WTC11 (cell line): ENCODE measurements at regions of chr1 and their contacts with region 1.

Region 1: GRCh38 chr1:63087966-63088365 is 234.4 kb upstream of the FOXD3 start:
- DNase-seq: peak; percentile 74
- ATAC-seq: peak; percentile 100
- H3K4me3 Mint-ChIP-seq: no peak overlapping the region
- H3K27ac Mint-ChIP-seq: 0 out of 2 replicates have a peak overlapping the region, but pooled peaks have one; percentile 62
- H3K4me1 Mint-ChIP-seq: peaks cover 17% of the 10 kb centered on the region
- H3K27me3 Mint-ChIP-seq: peaks cover 4% of the 10 kb centered on the region; the same call in 1 of the 2 replicates
- CTCF ChIP-seq: no peak

Region 2: GRCh38 chr1:63108206-63108605 is 20.2 kb after region 1 on chr1:
- CTCF ChIA-PET with region 1: interaction called, 16 read pairs
- POLR2A ChIA-PET with region 1: no interaction called
- DNase-seq: no peak
- ATAC-seq: no peak
- H3K4me3 Mint-ChIP-seq: no peak overlapping the region
- H3K27ac Mint-ChIP-seq: no peak overlapping the region
- H3K4me1 Mint-ChIP-seq: peaks cover 72% of the 10 kb centered on the region
- H3K27me3 Mint-ChIP-seq: no peaks in the 10 kb centered on the region
- CTCF ChIP-seq: no peak

Region 3: GRCh38 chr1:63238721-63239120 is 150.8 kb after region 1 on chr1:
- CTCF ChIA-PET with region 1: no interaction called
- POLR2A ChIA-PET with region 1: no interaction called
- DNase-seq: no peak
- ATAC-seq: no peak
- H3K4me3 Mint-ChIP-seq: no peak overlapping the region
- H3K27ac Mint-ChIP-seq: no peak overlapping the region
- H3K4me1 Mint-ChIP-seq: no peaks in the 10 kb centered on the region
- H3K27me3 Mint-ChIP-seq: no peaks in the 10 kb centered on the region
- CTCF ChIP-seq: no peak